ENCODE measurements at regions of chr3 and their contacts with region 1.

Region 1: GRCh38 chr3:2921903-2922302 is 188.3 kb downstream of the IL5RA start:
- DNase-seq: no peak
- ATAC-seq: peak; percentile 59 to 63
- H3K4me3 ChIP-seq: no peak overlapping the region
- H3K27ac ChIP-seq: no peak overlapping the region
- H3K4me1 ChIP-seq: no peaks in the 10 kb centered on the region
- H3K27me3 ChIP-seq: no peaks in the 10 kb centered on the region

Region 2: GRCh38 chr3:2268779-2269178 is 653.1 kb before region 1 on chr3:
- intact Hi-C with region 1: loop called in 1 of 4 experiments (anchors 5 kb)
- DNase-seq: no peak
- ATAC-seq: no peak
- H3K4me3 ChIP-seq: no peak overlapping the region
- H3K27ac ChIP-seq: no peak overlapping the region
- H3K4me1 ChIP-seq: no peaks in the 10 kb centered on the region
- H3K27me3 ChIP-seq: no peaks in the 10 kb centered on the region

Region 3: DNA sequence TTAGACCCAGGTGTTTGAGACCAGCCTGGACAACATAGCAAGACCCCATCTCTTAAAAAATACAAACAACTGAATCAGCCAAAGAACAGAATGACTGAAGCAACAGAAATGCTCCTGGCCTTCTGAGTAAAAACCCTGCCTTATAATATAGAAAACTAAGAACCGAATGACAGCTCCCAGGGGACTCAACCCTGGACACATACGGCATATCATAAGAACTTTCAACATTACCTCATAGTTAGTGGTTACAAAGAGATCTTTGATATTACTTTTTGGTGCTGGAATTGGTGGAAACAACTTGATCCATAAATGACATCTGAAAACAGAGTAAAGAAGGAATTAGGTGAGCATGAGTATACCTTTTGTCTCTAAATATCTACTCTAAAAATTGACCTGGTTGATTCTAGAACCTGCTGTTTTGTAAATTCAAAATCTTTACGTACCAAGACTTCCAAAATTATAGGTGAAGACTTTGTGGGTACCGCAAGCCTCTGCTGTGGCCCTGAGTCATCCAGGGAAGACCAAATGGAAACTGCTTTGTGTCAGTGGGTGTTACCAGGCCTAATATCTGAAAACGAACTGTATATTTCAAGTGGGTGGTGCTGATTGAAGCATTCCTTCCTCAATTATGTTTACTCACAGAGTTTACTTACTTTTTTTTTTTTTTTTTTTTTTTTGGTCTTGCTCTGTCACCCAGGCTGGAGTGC is 152.8 kb after region 1 on chr3:
- intact Hi-C with region 1: no loop called
- DNase-seq: no peak
- ATAC-seq: no peak
- H3K4me3 ChIP-seq: no peak overlapping the region
- H3K27ac ChIP-seq: no peak overlapping the region
- H3K4me1 ChIP-seq: no peaks in the 10 kb centered on the region
- H3K27me3 ChIP-seq: no peaks in the 10 kb centered on the region

Measured in right cardiac atrium (tissue), 5 donors.